Breast epithelium (tissue), 4 donors: ENCODE measurements at regions of chr12 and their contacts with region 1.

Region 1: GRCh38 chr12:113184900-113185773 is at the starts of genes DDX54 and RITA1:
- DNase-seq: peak; percentile 81 to 86
- H3K4me3 ChIP-seq: peak within 1 kb of the TSS; percentile 97 to 99 (median 98)
- H3K27ac ChIP-seq: peak within 1 kb of the TSS; percentile 97 to 99
- H3K4me1 ChIP-seq: peaks cover 0 to 21% of the 10 kb centered on the region in 2 donors
- H3K27me3 ChIP-seq: no peaks in the 10 kb centered on the region
- CTCF ChIP-seq: no peak
- POLR2A ChIP-seq: peak; percentile 36
- total RNA-seq, gene DDX54: 51.5 to 62.1 (median 60.3) TPM
- total RNA-seq, gene RITA1: 9.4 to 22.4 (median 15.4) TPM

Region 2: GRCh38 chr12:113358381-113359132 is 173.4 kb after region 1 on chr12 and contains the start of gene PLBD2:
- intact Hi-C with region 1: loop called (anchors 10 kb)
- DNase-seq: peak; percentile 92 to 94
- H3K4me3 ChIP-seq: peak within 1 kb of the TSS; percentile 81 to 87 (median 85)
- H3K27ac ChIP-seq: peak within 1 kb of the TSS; percentile 87 to 93
- H3K4me1 ChIP-seq: no peaks in the 10 kb centered on the region
- H3K27me3 ChIP-seq: no peaks in the 10 kb centered on the region
- CTCF ChIP-seq: no peak
- POLR2A ChIP-seq: no peak
- total RNA-seq, gene PLBD2: 15.4 to 59.8 (median 26.9) TPM